ENCODE measurements at regions of chr10 and their contacts with region 1.

Region 1: GRCh38 chr10:78302989-78303854 is 269.6 kb downstream of the RPS24 start:
- DNase-seq: peak; percentile 98
- ATAC-seq: peak; percentile 86
- H3K4me3 ChIP-seq: peak overlapping the region; percentile 59 to 81 (median 66)
- H3K4me3 Mint-ChIP-seq: peak overlapping the region; percentile 97
- H3K27ac ChIP-seq: peak overlapping the region; percentile 80 to 93
- H3K27ac Mint-ChIP-seq: peak overlapping the region; percentile 98
- H3K4me1 ChIP-seq: peaks cover 32 to 48% of the 10 kb centered on the region in 2 donors
- H3K4me1 Mint-ChIP-seq: peaks cover 45% of the 10 kb centered on the region
- H3K27me3 ChIP-seq: no peaks in the 10 kb centered on the region
- H3K27me3 Mint-ChIP-seq: no peaks in the 10 kb centered on the region
- CTCF ChIP-seq: peak; percentile 85

Region 2: DNA sequence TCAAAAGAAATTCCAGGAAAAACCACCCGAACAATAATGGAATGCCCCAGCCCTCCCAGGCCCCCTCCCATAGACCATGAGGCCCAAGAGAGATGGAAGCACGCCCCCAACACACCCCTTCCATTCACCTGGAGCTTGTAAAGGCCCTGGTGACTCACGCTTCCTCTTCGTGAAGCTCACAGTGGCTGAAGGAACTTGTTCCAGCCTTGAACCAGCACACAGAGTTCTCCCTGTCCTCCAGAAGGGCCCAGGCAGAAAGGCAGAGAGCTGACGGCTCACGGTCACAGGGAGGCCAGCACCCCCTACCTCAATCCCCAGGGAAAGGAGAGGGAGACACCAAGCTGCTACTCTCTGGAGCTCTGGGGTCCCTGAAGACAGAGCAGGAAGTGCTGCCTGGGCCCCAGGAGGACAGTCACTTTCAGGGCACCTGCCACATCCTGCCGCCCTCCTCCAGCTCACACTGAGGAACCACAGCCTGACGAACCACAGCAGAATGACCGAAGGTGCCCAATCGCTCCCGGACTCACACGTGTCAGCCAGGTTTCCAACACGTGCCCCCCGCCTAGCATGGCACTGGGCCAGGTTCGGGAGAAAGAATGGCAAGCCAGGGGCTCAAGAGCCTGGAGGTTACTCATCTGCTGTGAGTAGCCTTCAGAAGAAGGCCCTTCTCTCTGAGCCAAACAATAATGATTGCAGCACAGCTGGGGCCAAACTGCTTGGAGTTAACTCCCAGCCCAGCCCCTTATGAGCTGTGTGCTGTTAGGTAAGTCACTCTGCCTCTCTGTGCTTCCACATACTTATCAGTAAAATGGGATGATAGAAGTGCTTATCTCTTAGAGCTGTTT is 429.5 kb before region 1 on chr10:
- CTCF ChIA-PET with region 1: no interaction called
- POLR2A ChIA-PET with region 1: no interaction called
- intact Hi-C with region 1: loop called (anchors 10 kb)
- DNase-seq: peak; percentile 58
- ATAC-seq: peak; percentile 65
- H3K4me3 ChIP-seq: peak overlapping the region in 2 of 5 experiments; percentile 10
- H3K4me3 Mint-ChIP-seq: peak overlapping the region; percentile 82
- H3K27ac ChIP-seq: peak overlapping the region; percentile 30 to 65
- H3K27ac Mint-ChIP-seq: peak overlapping the region; percentile 87
- H3K4me1 ChIP-seq: peaks cover 28 to 37% of the 10 kb centered on the region in 2 donors
- H3K4me1 Mint-ChIP-seq: peaks cover 38% of the 10 kb centered on the region
- H3K27me3 ChIP-seq: no peaks in the 10 kb centered on the region
- H3K27me3 Mint-ChIP-seq: no peaks in the 10 kb centered on the region
- CTCF ChIP-seq: no peak

Region 3: GRCh38 chr10:78047314-78047891 is 255.8 kb before region 1 on chr10:
- CTCF ChIA-PET with region 1: interaction called, 15 read pairs
- POLR2A ChIA-PET with region 1: no interaction called
- intact Hi-C with region 1: loop called (anchors 5 kb)
- DNase-seq: peak; percentile 79
- ATAC-seq: peak; percentile 76
- H3K4me3 ChIP-seq: no peak overlapping the region
- H3K4me3 Mint-ChIP-seq: no peak overlapping the region
- H3K27ac ChIP-seq: no peak overlapping the region
- H3K27ac Mint-ChIP-seq: no peak overlapping the region
- H3K4me1 ChIP-seq: peaks cover 0 to 17% of the 10 kb centered on the region in 2 donors
- H3K4me1 Mint-ChIP-seq: peaks cover 16% of the 10 kb centered on the region
- H3K27me3 ChIP-seq: no peaks in the 10 kb centered on the region
- H3K27me3 Mint-ChIP-seq: no peaks in the 10 kb centered on the region
- CTCF ChIP-seq: peak; percentile 90

Region 4: DNA sequence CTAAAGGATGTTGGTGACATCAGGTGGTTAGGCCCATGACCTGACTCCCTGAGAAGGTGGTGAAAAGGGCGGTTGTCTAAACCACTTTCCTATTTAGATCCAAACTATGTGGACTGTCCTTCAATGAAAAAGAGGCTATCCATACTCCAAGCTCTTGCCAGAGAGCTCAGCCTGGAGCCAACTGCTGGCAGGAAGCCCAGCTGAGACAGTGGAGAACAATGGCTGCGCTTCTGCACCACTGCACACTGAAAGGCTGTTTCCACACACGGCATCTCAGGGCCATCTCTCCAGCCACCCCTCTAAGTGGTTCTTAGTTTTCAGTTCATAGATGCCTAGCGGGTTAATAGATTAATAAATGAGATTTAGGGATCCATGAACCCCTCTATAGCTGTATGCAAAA is 276.8 kb after region 1 on chr10:
- CTCF ChIA-PET with region 1: no interaction called
- POLR2A ChIA-PET with region 1: no interaction called
- intact Hi-C with region 1: loop called (anchors 2 kb)
- DNase-seq: no peak
- ATAC-seq: no peak
- H3K4me3 ChIP-seq: no peak overlapping the region
- H3K4me3 Mint-ChIP-seq: no peak overlapping the region
- H3K27ac ChIP-seq: no peak overlapping the region
- H3K27ac Mint-ChIP-seq: no peak overlapping the region
- H3K4me1 ChIP-seq: peaks cover 2 to 6% of the 10 kb centered on the region in 2 donors
- H3K4me1 Mint-ChIP-seq: peaks cover 18% of the 10 kb centered on the region
- H3K27me3 ChIP-seq: peaks cover 0 to 4% (median 0%) of the 10 kb centered on the region in 4 experiments
- H3K27me3 Mint-ChIP-seq: no peaks in the 10 kb centered on the region
- CTCF ChIP-seq: no peak

Region 5: GRCh38 chr10:79249186-79250121 is 946.2 kb after region 1 on chr10:
- CTCF ChIA-PET with region 1: no interaction called
- POLR2A ChIA-PET with region 1: no interaction called
- intact Hi-C with region 1: loop called (anchors 2 kb)
- DNase-seq: peak; percentile 70
- ATAC-seq: peak; percentile 28
- H3K4me3 ChIP-seq: peak overlapping the region in 2 of 5 experiments; percentile 30
- H3K4me3 Mint-ChIP-seq: peak overlapping the region; percentile 84
- H3K27ac ChIP-seq: peak overlapping the region; percentile 93 to 95
- H3K27ac Mint-ChIP-seq: peak overlapping the region; percentile 95
- H3K4me1 ChIP-seq: peaks cover 99 to 100% of the 10 kb centered on the region in 2 donors
- H3K4me1 Mint-ChIP-seq: peaks cover 99% of the 10 kb centered on the region
- H3K27me3 ChIP-seq: no peaks in the 10 kb centered on the region
- H3K27me3 Mint-ChIP-seq: no peaks in the 10 kb centered on the region
- CTCF ChIP-seq: no peak

Region 6: GRCh38 chr10:79938728-79939406 is 1635.6 kb after region 1 on chr10:
- CTCF ChIA-PET with region 1: no interaction called
- POLR2A ChIA-PET with region 1: no interaction called
- intact Hi-C with region 1: loop called (anchors 10 kb)
- DNase-seq: peak; percentile 91
- ATAC-seq: peak; percentile 81
- H3K4me3 ChIP-seq: peak overlapping the region in 1 of 5 experiments; percentile 29
- H3K4me3 Mint-ChIP-seq: peak overlapping the region; percentile 80
- H3K27ac ChIP-seq: peak overlapping the region; percentile 78 to 88
- H3K27ac Mint-ChIP-seq: peak overlapping the region; percentile 97
- H3K4me1 ChIP-seq: peaks cover 42 to 45% of the 10 kb centered on the region in 2 donors
- H3K4me1 Mint-ChIP-seq: peaks cover 55% of the 10 kb centered on the region
- H3K27me3 ChIP-seq: no peaks in the 10 kb centered on the region
- H3K27me3 Mint-ChIP-seq: peaks cover 5% of the 10 kb centered on the region
- CTCF ChIP-seq: no peak